ENCODE measurements at regions of chr5 and their contacts with region 1.

Region 1: DNA sequence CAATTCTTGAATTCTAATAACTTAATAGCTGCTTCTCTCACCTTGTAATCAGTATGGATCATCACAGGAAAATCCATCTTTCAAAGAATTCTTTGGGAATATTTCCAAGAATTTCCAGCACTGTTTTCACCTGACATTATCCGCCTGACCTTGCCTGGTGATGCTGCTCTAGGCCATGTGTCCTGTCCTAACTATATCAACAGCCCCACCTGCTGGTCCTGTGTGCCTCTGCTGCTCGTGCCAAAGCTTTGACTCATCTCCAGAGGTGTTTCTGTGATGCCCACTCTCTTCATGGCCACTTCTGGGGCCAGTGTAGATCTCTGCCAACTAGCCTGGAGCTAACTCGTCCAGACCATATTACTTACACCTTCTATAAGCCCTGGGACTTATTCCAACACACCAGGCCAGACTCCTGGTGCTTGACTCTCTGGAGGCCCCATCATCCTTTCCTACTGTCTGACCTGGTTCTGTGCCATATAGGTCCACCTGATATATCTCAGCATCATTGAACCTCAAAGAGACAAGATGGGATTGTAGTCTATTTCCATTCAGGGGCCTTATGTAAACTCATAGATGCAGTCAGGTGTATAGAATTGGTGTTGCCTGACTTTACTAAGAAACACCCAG is 67.5 kb upstream of the CKMT2 start:
- DNase-seq: peak; percentile 88
- H3K4me3 Mint-ChIP-seq: no peak overlapping the region
- H3K27ac Mint-ChIP-seq: no peak overlapping the region
- H3K4me1 Mint-ChIP-seq: peaks cover 3% of the 10 kb centered on the region
- H3K27me3 Mint-ChIP-seq: no peaks in the 10 kb centered on the region

Region 2: DNA sequence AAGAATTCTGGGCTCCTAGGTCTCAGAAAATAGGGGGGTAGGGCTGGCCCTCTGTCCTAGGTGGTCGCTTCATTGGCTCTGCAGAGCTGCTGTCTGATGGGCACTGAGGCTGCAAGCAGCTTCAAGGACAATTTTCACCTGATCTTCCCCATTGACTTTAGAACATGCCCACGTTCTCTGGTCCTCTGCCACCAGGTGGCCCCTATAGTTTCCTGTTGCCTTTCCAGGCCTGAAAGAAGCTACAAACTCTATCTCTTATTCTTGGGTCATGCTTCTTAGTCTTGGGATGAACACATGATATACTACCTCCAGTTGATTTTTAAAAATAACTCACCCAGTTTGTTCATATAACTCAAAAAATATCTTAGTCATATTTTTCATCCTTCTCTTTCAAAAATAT is 819.6 kb before region 1 on chr5:
- CTCF ChIA-PET with region 1: interaction called, 3 read pairs
- intact Hi-C with region 1: loop called (anchors 10 kb)
- DNase-seq: peak; percentile 63
- H3K4me3 Mint-ChIP-seq: no peak overlapping the region
- H3K27ac Mint-ChIP-seq: no peak overlapping the region
- H3K4me1 Mint-ChIP-seq: no peaks in the 10 kb centered on the region
- H3K27me3 Mint-ChIP-seq: peaks cover 4% of the 10 kb centered on the region

Region 3: GRCh38 chr5:80487829-80488721 is 677.5 kb before region 1 on chr5 and contains the start of gene FAM151B:
- CTCF ChIA-PET with region 1: no interaction called
- intact Hi-C with region 1: loop called (anchors 10 kb)
- DNase-seq: peak; percentile 85
- H3K4me3 Mint-ChIP-seq: peak within 1 kb of the TSS; percentile 79
- H3K27ac Mint-ChIP-seq: no peak within 1 kb of the TSS
- H3K4me1 Mint-ChIP-seq: peaks cover 13% of the 10 kb centered on the region
- H3K27me3 Mint-ChIP-seq: no peaks in the 10 kb centered on the region
- total RNA-seq, gene FAM151B: 0.15 to 0.36 TPM

Region 4: DNA sequence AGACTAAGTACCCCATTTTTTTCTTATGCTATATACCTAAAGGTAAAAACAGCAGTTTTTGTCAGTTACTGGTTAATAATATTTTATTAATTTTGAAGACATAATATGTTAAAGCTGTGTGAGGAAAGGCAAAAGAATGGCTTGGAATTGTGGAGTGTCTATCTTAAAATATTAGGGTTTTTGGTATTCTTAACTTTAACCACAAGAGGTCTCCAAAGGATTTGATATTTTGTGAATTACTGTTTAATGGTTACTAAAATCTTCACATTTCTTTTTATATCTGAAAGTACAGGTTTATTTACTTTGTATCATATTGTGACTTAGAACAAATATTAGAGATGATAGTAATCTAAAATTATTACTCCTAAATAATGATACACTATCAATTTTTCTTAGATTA is 478.8 kb before region 1 on chr5:
- CTCF ChIA-PET with region 1: interaction called, 4 read pairs
- intact Hi-C with region 1: loop called (anchors 1 kb)
- DNase-seq: no peak
- H3K4me3 Mint-ChIP-seq: no peak overlapping the region
- H3K27ac Mint-ChIP-seq: no peak overlapping the region
- H3K4me1 Mint-ChIP-seq: peaks cover 11% of the 10 kb centered on the region
- H3K27me3 Mint-ChIP-seq: no peaks in the 10 kb centered on the region

Region 5: GRCh38 chr5:80711938-80712337 is 453.7 kb before region 1 on chr5:
- CTCF ChIA-PET with region 1: interaction called, 5 read pairs
- intact Hi-C with region 1: loop called (anchors 1 kb)
- DNase-seq: peak; percentile 33
- H3K4me3 Mint-ChIP-seq: no peak overlapping the region
- H3K27ac Mint-ChIP-seq: no peak overlapping the region
- H3K4me1 Mint-ChIP-seq: peaks cover 6% of the 10 kb centered on the region
- H3K27me3 Mint-ChIP-seq: no peaks in the 10 kb centered on the region

Region 6: GRCh38 chr5:80935811-80936385 is 229.7 kb before region 1 on chr5:
- CTCF ChIA-PET with region 1: interaction called, 3 read pairs
- intact Hi-C with region 1: loop called (anchors 1 kb)
- DNase-seq: peak; percentile 20
- H3K4me3 Mint-ChIP-seq: no peak overlapping the region
- H3K27ac Mint-ChIP-seq: no peak overlapping the region
- H3K4me1 Mint-ChIP-seq: peaks cover 4% of the 10 kb centered on the region
- H3K27me3 Mint-ChIP-seq: no peaks in the 10 kb centered on the region